ENCODE measurements at regions of chr6 and their contacts with region 1.

Region 1: DNA sequence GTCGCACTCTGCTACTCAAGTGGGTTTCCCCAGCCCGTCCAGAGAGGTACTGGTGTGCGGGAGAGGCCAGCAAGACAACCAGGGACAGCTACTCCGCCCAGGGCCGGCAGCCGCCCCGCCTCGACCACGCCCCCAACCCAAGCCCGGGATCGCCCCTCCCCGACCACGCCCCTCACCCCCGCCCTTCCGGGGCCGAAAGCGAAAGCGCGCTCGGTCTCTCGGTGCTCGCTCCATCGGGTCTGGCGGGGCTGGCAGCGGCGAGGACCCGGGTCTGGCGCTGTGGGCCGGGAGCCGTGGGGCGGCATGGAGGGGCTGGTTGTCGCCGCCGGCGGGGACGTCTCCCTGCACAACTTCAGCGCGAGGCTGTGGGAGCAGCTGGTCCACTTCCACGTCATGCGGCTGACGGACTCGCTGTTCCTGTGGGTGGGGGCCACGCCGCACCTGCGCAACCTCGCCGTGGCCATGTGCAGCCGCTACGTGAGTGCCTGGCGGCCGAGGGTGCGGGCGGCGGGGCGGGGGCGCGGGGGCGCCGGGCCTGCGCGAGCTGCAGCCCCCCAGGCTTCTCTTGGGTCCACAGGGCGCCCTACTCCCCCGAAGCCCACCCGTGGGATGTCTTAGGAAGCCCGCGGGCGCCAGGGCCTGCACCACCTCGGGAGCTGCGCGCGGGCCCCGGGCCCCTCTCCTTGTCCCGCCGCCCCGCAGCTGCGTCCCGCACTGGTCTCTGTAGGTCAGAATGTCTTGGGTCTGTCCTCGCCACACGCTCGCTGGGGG is at the start of gene PSMG4:
- DNase-seq: peak; percentile 86
- H3K4me3 ChIP-seq: peak within 1 kb of the TSS; percentile 56 to 97 (median 95)
- H3K27ac ChIP-seq: peak within 1 kb of the TSS; percentile 41
- H3K4me1 ChIP-seq: peaks cover 12% of the 10 kb centered on the region
- H3K27me3 ChIP-seq: no peaks in the 10 kb centered on the region
- CTCF ChIP-seq: no peak
- total RNA-seq, gene PSMG4: 14.3 to 29.9 TPM

Region 2: DNA sequence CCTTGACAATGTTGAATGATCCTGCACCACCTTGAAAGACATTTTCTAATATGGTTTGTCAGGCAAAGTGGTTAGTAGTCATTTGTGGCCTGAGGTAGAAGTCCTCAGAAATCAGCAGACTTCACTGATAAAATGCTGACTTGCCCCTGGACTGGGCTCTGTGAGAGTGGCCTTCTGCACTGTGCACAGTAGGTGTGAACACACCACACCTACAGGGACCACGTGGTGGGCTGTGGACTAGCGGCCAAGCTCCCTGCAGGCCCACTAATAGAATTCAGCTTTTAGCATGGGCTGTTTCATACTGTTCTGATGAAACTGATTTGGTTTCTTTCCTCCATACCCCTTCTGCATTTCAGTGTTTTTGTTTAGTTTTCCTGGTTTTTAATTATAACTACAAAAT is 133.1 kb before region 1 on chr6:
- CTCF ChIA-PET with region 1: no interaction called
- dilution Hi-C with region 1: no loop called
- in situ Hi-C with region 1: loop called in 1 of 2 experiments (anchors 5 kb)
- intact Hi-C with region 1: loop called (anchors 2 kb)
- DNase-seq: no peak
- H3K4me3 ChIP-seq: no peak overlapping the region
- H3K27ac ChIP-seq: no peak overlapping the region
- H3K4me1 ChIP-seq: no peaks in the 10 kb centered on the region
- H3K27me3 ChIP-seq: no peaks in the 10 kb centered on the region
- CTCF ChIP-seq: no peak

Region 3: GRCh38 chr6:3157131-3157927 is 101.6 kb before region 1 on chr6 and contains the start of gene TUBB2A:
- CTCF ChIA-PET with region 1: no interaction called
- dilution Hi-C with region 1: no loop called
- in situ Hi-C with region 1: loop called in 1 of 2 experiments (anchors 10 kb)
- intact Hi-C with region 1: no loop called
- DNase-seq: peak; percentile 80
- H3K4me3 ChIP-seq: peak within 1 kb of the TSS; percentile 74 to 92 (median 81)
- H3K27ac ChIP-seq: peak within 1 kb of the TSS; percentile 80
- H3K4me1 ChIP-seq: peaks cover 5% of the 10 kb centered on the region
- H3K27me3 ChIP-seq: no peaks in the 10 kb centered on the region
- CTCF ChIP-seq: peak; percentile 14 to 55
- total RNA-seq, gene TUBB2A: 70.2 to 214 TPM

Region 4: DNA sequence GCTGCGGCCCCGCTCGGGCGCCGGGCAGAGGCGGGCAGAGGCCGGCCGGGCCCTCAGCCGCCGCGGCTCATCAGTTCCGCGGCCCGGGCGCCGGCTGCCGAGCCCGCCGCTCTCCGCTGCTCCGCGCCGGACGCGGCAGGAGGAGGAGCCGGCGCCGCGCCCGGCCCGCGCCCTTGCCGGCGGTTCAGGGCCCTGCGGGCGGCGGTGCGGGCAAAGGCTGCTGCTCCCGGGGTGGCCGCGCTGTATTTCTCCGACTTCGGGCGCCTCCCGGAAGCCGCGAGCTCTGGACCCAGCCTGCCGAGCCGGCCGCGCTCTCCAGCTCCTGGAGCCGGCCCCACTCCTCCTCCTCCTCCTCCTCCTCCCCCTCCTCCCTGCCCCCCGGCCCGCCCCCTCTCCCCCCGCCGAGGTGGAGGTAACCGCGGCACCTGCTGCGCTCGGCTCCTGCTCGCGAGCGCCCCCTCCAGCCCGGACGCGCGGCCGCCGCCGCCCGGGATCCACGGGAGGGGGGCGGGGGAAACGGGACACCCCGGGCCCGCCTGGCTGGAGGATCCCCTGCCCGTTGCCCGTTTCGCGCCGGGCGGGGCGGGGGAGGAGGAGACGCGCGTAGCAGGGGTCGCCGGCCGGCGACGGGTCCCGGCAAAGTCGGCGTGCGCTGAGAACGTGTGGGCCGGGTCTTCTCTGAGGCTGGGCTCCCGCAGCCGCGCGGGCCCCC is 198.0 kb after region 1 on chr6 and contains the start of gene SLC22A23:
- CTCF ChIA-PET with region 1: no interaction called
- dilution Hi-C with region 1: no loop called
- in situ Hi-C with region 1: no loop called
- intact Hi-C with region 1: no loop called
- DNase-seq: peak; percentile 60
- H3K4me3 ChIP-seq: peak within 1 kb of the TSS; percentile 82 to 93 (median 88)
- H3K27ac ChIP-seq: peak within 1 kb of the TSS; percentile 29
- H3K4me1 ChIP-seq: peaks cover 26% of the 10 kb centered on the region
- H3K27me3 ChIP-seq: no peaks in the 10 kb centered on the region
- CTCF ChIP-seq: peak; percentile 37 to 65
- total RNA-seq, gene SLC22A23: 34.0 to 49.3 TPM

Region 5: GRCh38 chr6:4805553-4806336 is 1546.8 kb after region 1 on chr6:
- CTCF ChIA-PET with region 1: no interaction called
- dilution Hi-C with region 1: no loop called
- in situ Hi-C with region 1: no loop called
- intact Hi-C with region 1: no loop called
- DNase-seq: peak; percentile 40
- H3K4me3 ChIP-seq: no peak overlapping the region
- H3K27ac ChIP-seq: peak overlapping the region; percentile 50
- H3K4me1 ChIP-seq: peaks cover 43% of the 10 kb centered on the region
- H3K27me3 ChIP-seq: no peaks in the 10 kb centered on the region
- CTCF ChIP-seq: peak; percentile 76 to 88

Measured in mammary epithelial cell (primary cell).